HEK293T (cell line): ENCODE measurements at regions of chr1 and their contacts with region 1.

Region 1: DNA sequence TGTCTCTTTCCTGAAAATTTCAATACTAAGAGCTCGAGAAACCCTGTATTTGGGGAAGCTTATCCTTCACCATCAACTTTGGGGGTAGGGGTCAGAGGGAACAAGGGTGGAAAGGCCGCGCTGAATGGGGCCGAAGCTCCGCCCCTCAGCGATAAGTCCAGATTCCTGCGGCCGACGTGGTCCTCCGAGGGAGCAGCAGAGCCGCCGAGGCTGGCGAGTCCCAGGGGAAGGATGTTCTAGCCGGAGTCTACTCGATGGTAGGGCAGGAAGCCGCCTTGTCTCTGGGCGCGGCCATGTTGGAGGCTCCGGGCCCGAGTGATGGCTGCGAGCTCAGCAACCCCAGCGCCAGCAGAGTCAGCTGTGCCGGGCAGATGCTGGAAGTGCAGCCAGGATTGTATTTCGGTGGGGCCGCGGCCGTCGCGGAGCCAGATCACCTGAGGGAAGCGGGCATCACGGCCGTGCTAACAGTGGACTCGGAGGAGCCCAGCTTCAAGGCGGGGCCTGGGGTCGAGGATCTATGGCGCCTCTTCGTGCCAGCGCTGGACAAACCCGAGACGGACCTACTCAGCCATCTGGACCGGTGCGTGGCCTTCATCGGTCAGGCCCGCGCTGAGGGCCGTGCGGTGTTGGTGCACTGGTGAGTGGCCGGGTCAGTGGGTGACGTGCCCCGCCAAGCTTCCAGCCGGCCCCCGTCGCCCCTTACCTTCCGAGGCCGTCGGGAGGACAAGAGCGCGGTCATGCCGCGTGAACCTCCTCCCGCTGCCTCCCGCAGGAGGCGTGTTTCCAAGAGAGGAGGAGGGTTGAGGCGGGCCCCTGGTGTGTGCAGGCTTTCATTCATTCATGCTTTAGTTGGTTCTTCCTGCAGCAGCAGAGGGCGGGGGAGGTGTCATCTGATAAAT is at the start of gene DUSP12:
- DNase-seq: peak; percentile 97

Region 2: DNA sequence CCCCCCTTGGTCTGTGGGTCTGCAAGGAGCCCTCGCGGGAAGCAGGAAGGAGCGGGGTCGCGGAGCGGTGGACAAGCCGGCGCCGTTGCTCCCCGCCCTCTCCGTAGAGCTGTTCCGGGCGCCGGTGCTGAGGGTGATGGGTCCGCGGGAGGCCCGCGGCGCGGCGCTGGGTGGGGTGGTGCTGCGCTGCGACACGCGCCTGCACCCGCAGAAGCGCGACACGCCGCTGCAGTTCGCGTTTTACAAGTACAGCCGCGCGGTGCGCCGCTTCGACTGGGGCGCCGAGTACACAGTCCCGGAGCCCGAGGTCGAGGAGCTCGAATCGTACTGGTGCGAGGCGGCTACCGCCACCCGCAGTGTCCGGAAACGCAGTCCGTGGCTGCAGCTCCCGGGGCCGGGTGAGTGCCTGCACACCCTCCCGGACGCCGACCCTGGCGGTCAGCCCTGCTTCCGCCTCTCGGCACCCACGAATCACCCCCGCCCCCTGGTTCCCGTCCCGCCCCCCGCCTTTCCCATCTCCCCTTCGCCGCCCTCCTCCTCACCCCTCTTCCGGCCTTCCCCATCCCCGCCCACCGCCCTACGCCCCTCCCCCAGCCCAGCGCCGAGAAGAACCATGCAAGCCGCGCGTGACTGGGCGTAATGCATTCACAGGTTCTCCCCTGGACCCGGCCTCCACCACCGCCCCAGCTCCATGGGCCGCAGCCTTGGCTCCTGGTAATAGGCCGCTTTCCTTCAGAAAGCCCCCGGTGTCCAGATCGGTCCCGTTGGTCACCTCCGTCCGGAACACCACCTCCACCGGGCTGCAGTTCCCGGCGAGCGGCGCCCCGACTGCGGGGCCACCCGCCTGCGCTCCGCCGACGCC is 22.9 kb before region 1 on chr1:
- CTCF ChIA-PET with region 1: no interaction called
- POLR2A ChIA-PET with region 1: interaction called, 20 read pairs
- DNase-seq: peak; percentile 85

Region 3: DNA sequence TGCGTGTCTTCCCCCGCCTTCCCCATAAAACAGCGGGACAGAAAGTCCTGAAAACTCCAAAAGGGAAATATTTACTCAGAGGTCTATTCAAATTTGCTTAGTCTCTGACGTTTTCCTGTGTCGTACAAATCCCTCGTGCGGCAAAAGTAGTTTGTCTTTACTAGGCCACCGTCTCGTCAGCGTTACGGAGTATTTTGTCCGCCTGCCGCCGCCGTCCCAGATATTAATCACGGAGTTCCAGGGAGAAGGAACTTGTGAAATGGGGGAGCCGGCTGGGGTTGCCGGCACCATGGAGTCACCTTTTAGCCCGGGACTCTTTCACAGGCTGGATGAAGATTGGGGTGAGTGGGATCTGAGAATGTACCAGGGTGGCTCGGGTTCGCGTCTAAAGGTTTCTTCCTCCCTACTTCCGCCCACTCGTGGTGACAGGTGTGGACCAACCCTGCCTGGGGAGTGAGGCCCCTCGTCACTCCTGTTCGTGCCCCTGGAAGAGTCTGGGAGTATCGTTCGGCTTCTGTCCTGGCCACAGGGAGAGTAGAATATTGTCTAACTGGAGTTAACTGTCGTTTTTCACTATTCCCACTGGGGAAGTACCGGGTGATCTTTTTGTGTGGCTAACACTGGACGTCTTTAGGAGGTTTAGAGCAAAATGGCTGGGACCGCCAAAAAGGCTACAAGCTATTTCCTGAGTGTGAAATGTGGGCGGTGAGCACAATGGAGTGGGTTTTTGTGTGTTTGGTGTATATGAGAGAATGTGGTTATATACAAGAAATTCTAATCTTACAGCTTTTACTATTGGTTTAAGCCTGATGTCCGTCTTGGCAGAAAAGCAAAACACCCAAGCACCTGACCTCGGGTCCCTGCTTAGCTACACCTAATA is 16.6 kb after region 1 on chr1 and contains the start of gene ATF6:
- CTCF ChIA-PET with region 1: interaction called, 8 read pairs
- POLR2A ChIA-PET with region 1: interaction called, 12 read pairs
- DNase-seq: peak; percentile 77

Region 4: DNA sequence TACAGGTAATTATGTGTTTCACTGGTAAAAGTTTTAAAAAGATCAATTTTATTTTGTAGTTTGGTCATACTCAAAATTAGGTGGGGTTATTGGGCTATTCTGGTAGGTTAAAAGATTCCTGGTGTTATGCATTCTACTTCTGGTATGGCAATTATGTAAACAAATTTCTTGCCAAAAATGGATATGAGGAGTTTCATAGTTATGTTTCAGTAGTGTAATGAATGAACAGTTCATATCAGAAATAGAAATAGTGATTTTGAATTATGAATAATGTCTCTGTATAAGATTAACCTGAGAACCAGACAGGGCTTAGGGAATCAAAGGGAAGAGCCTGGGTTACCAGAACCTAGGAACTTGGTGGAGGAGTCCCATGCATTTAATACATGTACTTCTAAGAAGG is 32.2 kb after region 1 on chr1:
- CTCF ChIA-PET with region 1: no interaction called
- POLR2A ChIA-PET with region 1: no interaction called
- DNase-seq: no peak